ENCODE measurements at regions of chr12 and their contacts with region 1.

Region 1: GRCh38 chr12:114662512-114663177 is 21.3 kb downstream of the TBX3 start:
- DNase-seq: peak; percentile 96
- H3K4me3 ChIP-seq: no peak overlapping the region
- H3K27ac ChIP-seq: peak overlapping the region; percentile 88 to 98
- H3K4me1 ChIP-seq: no peaks in the 10 kb centered on the region
- H3K27me3 ChIP-seq: no peaks in the 10 kb centered on the region
- CTCF ChIP-seq: peak; percentile 90 to 99 (median 95)
- POLR2A ChIP-seq: no peak

Region 2: DNA sequence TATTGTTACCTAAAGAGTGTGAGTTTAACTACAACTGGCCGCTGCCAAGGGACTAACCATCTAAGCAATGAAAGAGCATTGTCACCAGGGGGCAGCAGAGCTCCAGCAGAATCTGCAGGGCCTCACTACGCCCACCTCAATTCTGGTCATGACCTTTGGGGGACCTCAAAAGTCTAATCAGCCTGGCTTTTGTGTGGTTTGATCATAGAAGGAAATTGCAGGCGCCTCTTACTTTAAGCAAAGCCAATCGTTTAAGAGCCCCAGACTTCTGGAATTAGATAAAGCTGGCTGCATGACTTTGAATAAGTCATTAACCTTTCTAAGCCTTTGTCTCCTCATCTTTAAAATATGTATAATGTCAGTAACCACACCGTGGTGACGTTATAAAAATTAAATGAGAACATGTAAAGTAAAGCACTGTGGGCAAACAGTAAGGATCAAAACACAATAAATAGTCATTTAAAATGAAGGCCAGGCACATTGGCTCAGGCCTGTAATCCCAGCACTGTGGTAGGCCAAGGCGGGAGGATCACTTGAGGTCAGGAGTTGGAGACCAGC is 37.3 kb before region 1 on chr12:
- intact Hi-C with region 1: loop called (anchors 5 kb)
- DNase-seq: peak; percentile 73
- H3K4me3 ChIP-seq: no peak overlapping the region
- H3K27ac ChIP-seq: peak overlapping the region; percentile 20 to 64
- H3K4me1 ChIP-seq: no peaks in the 10 kb centered on the region
- H3K27me3 ChIP-seq: no peaks in the 10 kb centered on the region
- CTCF ChIP-seq: peak; percentile 55 to 89 (median 79)
- POLR2A ChIP-seq: no peak

Region 3: GRCh38 chr12:115632308-115632707 is 969.7 kb after region 1 on chr12:
- intact Hi-C with region 1: loop called (anchors 10 kb)
- DNase-seq: peak; percentile 11
- H3K4me3 ChIP-seq: no peak overlapping the region
- H3K27ac ChIP-seq: no peak overlapping the region
- H3K4me1 ChIP-seq: no peaks in the 10 kb centered on the region
- H3K27me3 ChIP-seq: no peaks in the 10 kb centered on the region
- CTCF ChIP-seq: peak in 3 of 4 experiments; percentile 36 to 61 (median 61)
- POLR2A ChIP-seq: no peak

Measured in prostate gland (tissue), 2 donors.